Aorta (tissue), 5 donors: ENCODE measurements at regions of chr14 and their contacts with region 1.

Region 1: DNA sequence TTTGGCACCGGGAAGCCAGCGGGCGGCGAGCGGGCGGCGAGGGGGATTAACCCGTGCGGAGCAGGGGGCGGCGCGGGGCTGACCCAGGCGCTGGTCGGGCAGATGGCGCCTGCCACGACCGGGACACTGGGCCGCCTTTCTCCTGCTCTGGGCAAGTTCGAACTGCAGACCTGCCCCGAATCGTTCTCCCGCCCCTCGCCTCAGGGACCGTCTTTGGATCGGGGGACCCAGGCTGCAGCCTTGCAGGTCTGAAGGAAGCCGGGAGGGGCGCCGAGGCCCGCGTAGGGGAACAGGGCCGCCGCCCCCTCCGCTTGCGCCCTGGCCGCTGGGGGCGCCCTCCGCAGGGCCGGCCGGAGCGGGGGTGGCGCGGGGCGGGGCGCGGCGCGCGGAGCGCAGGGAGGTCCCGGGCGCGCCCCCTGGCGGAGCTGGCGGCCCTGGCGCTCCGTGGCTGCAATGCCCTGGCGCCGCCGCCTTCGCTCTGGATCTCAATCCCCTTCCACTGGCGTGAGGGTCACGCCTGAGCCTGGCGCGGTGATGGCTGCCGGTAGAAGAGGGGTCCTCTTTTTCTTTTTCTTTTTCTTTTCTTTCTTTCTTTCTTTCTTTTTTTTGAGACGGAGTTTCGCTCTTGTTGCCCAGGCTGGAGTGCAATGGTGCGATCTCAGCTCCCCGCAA is 449 bp upstream of the LTBP2 start:
- DNase-seq: peak; percentile 89 to 94
- ATAC-seq: peak; percentile 89
- H3K4me3 ChIP-seq: peak overlapping the region; percentile 60 to 93
- H3K27ac ChIP-seq: peak overlapping the region in 1 of 2 donors; percentile 25
- H3K4me1 ChIP-seq: peaks cover 5 to 7% of the 10 kb centered on the region in 2 donors
- H3K27me3 ChIP-seq: no peaks in the 10 kb centered on the region

Region 2: GRCh38 chr14:74571901-74572725 is 40.4 kb before region 1 on chr14:
- intact Hi-C with region 1: loop called in 1 of 2 experiments (anchors 5 kb)
- DNase-seq: peak; percentile 73 to 74
- ATAC-seq: peak; percentile 43
- H3K4me3 ChIP-seq: no peak overlapping the region
- H3K27ac ChIP-seq: peak overlapping the region; percentile 99
- H3K4me1 ChIP-seq: peaks cover 9 to 11% of the 10 kb centered on the region in 2 donors
- H3K27me3 ChIP-seq: no peaks in the 10 kb centered on the region

Region 3: DNA sequence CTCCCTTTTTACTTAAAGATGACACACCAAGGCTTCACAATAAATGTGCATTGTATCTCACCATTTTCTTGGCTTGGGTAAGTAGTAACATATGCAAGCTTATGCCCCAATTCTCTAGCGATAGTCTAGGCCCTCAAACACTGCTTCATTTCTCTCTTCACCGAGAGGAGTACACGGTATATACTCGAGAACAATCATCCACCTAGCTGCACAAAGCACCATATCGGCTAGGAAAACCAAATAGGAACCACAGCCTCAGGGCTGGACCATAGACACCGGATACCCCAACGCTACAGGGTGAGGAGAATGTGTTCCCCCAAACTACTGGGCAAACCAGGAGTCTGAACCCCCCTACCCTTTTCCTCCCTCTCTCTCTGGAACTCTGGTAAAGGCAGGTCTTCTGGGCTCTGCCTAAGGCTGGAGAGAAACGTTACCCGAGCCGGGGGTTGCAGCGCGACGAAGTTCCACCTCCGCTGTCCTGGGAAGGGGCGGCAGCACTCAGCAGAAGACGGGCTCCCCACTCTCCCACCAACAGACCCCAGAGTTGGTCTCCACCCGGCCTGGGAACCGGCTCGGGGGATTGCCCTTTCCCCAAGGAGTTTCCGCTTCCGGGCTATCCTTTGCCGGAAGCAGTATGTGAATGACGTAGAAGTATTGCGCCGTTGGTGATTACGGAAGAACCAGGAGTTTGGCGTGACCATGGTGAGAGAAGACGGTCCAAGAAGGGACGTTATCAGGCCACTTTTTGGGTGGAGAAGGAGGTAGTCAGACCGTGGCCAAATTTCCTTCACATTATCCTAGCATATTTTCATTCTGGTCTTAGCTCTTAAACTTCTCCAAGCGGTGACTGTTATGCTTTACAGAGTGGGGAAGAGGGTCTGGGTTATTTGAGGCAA is 100.3 kb after region 1 on chr14 and contains the starts of genes AREL1 and FCF1:
- intact Hi-C with region 1: loop called (anchors 2 to 5 kb)
- DNase-seq: peak; percentile 84 to 89
- ATAC-seq: peak; percentile 95
- H3K4me3 ChIP-seq: peak within 1 kb of the TSS; percentile 72 to 91
- H3K27ac ChIP-seq: peak within 1 kb of the TSS; percentile 2 to 34
- H3K4me1 ChIP-seq: no peaks in the 10 kb centered on the region
- H3K27me3 ChIP-seq: no peaks in the 10 kb centered on the region
- total RNA-seq, gene AREL1: 32.7 to 35.7 TPM
- total RNA-seq, gene FCF1: 40.8 to 42.4 TPM

Region 4: DNA sequence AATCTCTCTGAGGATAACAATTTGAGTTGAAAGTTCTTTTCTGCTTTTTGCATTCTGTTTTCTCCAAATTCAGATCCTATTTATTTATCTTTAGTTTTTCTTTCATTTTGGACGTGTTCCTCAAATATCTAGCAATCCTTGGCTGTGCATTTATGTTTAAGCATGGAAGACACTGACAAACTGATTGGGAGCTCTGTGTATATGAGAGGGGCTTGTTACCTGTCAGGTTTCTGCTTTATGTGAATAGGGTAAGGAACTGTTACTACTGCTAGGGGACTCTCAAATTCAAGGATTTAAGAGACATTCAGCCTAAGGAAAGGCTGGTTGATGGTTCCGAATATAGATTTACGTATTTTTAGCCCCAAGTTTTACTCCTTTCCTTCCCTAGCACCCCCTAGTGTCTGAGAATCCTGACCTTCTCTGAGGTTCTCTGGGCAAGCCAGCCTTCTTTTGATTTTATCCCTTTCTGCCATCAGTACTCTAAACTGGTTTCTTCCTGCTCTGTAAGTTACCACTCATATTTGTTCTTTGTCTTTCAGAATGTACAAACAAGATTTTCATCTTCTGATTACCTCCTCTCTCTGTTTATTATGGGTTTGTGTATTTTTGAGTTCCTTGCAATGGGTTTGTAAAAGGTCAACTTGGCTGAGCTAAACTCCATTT is 181.2 kb after region 1 on chr14:
- intact Hi-C with region 1: loop called in 1 of 2 experiments (anchors 5 kb)
- DNase-seq: no peak
- ATAC-seq: no peak
- H3K4me3 ChIP-seq: no peak overlapping the region
- H3K27ac ChIP-seq: peak overlapping the region in 1 of 2 donors; percentile 76
- H3K4me1 ChIP-seq: peaks cover 0 to 2% of the 10 kb centered on the region in 2 donors
- H3K27me3 ChIP-seq: no peaks in the 10 kb centered on the region

Region 5: DNA sequence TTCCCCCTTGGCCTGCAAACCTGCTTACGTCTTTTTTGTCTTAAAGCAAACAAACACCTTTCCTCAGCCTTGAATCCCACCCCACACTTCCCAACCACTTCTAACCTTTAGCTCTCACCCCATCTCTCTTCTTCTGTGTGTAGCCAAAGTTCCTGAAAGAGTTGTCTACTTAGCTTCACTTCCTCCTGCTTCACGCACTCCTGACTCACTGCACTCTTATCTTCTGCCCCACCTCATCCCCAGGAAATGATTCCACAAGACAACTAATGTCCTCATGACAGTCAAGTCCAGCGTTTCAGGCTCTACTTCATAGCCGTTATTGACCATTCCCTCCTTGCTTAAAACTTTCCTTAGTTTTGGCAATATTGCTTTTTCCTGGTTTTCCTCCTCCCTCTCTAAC is 412.6 kb after region 1 on chr14:
- intact Hi-C with region 1: no loop called
- DNase-seq: no peak
- ATAC-seq: no peak
- H3K4me3 ChIP-seq: no peak overlapping the region
- H3K27ac ChIP-seq: no peak overlapping the region
- H3K4me1 ChIP-seq: no peaks in the 10 kb centered on the region
- H3K27me3 ChIP-seq: no peaks in the 10 kb centered on the region